ENCODE measurements at regions of chr15 and their contacts with region 1.

Region 1: DNA sequence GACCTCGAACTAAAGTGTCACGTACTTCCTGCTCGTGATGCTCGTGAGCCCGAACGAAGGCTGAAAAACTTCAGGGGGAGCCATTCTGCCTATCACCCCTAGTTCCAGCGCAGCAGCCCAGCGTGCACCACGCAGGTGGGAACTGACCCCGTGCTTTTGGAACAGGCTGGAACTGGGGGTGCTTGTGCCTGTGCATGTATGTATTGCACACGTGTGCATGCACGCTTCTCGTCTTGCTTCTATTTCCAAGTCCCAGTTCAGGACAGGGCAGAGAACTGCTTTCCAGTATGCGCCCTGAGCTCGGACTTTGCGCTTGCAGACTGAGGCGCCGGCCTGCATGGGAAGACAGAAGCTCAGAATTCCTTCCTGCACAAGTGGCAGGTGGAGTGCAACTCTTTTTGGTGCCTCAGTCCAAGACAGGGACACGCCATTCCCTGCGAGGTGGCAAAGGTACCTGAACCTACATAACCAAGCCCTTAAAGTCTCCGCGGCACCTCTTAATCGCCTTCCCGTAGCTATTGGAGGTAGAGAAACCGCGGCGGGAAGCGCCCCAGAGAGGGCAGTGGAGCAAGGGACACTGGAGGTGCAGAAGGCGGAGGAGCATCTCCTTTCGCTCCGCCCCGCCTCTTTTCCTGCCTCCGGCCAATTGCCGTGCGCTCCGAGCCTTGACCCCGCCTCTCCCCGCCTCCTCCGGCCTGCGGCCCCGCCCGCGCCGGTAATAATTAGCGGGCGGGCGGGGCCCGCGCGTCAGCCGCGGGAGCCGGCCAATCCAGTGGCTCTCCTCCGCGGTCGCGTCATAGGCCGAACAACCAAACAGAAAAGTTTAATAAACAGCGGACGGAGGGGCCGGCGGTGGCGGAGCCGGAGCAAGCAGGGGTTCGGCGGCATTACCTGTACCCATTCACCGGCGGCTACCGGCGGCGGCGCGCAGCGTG is at the start of gene ZFAND6:
- DNase-seq: peak; percentile 95
- H3K4me3 ChIP-seq: peak within 1 kb of the TSS; percentile 72 to 95 (median 74)
- H3K27ac ChIP-seq: peak within 1 kb of the TSS; percentile 82
- H3K4me1 ChIP-seq: peaks cover 11% of the 10 kb centered on the region
- H3K27me3 ChIP-seq: no peaks in the 10 kb centered on the region
- CTCF ChIP-seq: no peak
- total RNA-seq, gene ZFAND6: 52.7 to 102 TPM

Region 2: DNA sequence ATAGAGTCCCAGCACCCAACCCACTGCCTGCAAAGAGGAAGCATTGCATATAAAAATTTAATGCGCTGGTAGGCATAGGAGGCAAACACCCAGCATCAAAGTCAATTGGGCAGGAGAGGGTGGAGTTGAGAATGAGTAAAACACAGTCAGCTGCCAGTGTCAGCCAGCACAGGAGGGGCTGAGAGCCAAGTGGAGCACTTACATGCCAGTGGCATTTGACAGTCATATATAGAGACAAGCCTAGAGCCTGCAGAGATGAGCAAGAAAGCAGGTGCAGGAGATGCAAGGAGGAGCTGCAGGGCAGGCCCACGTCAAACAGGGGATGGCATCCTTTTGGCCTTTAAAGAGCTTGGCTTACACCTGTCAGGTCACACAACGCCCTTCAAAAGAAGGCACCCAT is 27.3 kb before region 1 on chr15:
- CTCF ChIA-PET with region 1: no interaction called
- dilution Hi-C with region 1: no loop called
- in situ Hi-C with region 1: no loop called
- intact Hi-C with region 1: loop called (anchors 1 kb)
- DNase-seq: peak; percentile 30
- H3K4me3 ChIP-seq: no peak overlapping the region
- H3K27ac ChIP-seq: no peak overlapping the region
- H3K4me1 ChIP-seq: peaks cover 20% of the 10 kb centered on the region
- H3K27me3 ChIP-seq: no peaks in the 10 kb centered on the region
- CTCF ChIP-seq: no peak

Measured in mammary epithelial cell (primary cell).